Mammary epithelial cell (primary cell): ENCODE measurements at regions of chr6 and their contacts with region 1.

Region 1: DNA sequence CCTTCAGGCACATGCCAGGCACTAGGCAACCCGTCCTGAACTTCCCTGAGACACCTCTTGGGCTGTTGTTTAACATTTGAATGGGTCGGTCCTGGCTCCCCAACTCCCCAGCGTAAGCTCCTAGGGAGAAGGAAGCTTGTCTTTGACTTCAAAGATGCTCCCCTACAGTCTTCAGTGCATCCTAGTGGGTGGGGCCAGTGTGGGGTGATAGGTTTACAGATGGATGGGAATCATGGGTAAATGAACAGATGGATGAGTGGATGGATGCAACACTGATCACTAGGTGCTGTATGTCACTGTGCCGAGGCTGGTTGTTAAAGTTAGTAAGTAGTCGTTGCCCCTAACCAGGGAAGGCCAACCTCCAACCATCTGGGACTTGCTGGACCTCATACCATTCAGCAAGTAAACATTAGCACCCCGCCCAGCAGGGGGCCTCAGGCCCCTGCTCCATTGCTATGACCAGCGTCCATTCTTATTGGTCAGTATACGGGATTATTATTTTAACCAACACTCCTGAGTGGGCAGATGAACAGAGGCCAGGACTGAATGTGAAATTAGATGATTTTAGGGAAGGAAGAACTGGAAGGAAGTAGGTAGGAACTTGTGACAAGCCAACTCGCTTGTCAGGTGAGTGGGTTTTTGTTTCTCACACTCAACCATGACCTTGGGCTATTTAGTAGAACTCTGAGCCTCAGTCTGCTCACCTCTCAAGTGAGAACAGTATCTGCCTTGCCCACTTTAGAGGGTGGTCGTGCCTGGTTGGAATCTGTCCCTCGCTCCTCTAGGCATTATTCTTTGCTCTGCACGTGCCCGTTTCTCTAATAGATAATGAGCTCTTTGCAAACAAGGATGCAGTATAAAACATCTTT is 82.9 kb upstream of the FOXP4 start:
- DNase-seq: peak; percentile 39
- H3K4me3 ChIP-seq: no peak overlapping the region
- H3K27ac ChIP-seq: no peak overlapping the region
- H3K4me1 ChIP-seq: no peaks in the 10 kb centered on the region
- H3K27me3 ChIP-seq: no peaks in the 10 kb centered on the region
- CTCF ChIP-seq: peak; percentile 66 to 68

Region 2: DNA sequence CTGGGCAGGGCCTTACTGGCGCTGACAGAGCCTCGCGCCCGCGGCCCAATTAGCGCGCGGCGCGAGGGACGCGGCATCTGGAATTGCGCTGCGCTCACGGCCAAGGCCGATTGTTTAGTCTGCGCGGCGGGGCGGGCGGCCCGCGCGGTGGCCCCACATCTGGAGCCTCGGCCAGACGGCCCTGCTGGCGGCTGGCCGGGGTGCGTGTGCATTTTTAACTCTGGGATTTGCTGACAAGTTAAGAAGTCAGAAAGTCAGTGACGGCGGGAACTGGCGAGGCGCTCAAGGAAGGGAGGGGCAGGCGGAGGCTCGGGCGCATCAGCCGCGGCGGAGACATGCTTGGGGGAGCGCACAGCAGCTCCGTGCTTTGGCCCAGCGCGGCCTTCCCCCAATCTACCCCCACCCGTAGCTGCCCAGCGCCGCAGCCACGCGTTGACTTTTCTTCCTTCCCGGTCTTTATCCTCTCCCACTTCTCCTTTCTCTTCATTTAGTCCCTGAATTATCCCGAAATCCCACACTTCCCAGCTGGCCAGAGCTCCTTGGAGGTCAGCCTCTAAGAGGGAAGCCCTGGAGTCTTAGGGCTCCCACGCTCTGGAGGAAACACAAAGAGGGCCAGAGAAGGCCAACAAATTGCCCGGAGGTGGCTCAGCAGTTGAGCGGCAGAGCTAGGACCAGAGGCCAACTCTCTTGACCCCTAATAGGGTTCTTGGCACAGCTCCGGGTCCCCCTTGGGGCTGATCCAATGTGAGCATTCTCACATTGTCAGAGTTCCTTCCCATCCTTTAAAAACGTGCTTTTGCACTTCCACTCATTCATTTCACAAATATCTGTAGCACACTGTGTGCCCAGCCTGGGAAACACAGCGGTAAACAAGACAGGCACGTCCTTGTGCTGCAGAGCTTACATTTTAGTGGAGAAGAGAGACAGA is 42.1 kb after region 1 on chr6:
- CTCF ChIA-PET with region 1: no interaction called
- dilution Hi-C with region 1: loop called (anchors 5 kb)
- in situ Hi-C with region 1: no loop called
- intact Hi-C with region 1: loop called (anchors 10 kb)
- DNase-seq: peak; percentile 27
- H3K4me3 ChIP-seq: no peak overlapping the region
- H3K27ac ChIP-seq: no peak overlapping the region
- H3K4me1 ChIP-seq: peaks cover 9% of the 10 kb centered on the region
- H3K27me3 ChIP-seq: peaks cover 13% of the 10 kb centered on the region
- CTCF ChIP-seq: no peak

Region 3: DNA sequence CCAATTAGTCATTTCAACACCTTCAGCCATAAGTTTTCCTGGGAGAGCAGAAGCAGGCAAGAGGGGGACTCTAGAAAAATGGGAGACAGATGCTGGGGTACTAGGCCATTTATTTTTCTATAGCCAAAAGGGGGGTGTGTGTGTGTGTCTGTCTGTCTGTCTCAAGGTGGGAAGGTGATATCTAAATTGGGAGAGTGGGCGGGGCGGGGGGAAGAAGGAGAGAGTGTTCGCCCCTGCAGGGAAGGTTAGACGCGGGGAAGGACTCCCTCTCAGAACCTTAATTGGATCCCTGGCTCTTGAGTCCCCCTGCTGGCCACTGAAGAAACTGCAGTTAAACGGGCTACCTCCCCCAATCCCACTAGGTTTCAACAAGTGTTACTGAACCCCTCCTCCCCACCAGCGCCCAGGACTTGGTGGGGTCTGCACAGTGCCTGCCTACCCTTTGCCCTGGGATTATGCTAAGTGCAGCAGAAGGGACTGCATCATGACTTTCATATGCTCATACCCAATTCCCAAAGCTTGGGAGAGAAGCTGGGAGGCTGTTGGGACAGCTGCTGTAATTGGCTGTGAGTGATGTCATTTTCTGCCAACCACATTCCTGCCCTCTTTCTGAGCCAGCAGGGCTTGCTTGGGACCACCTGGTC is 128.7 kb after region 1 on chr6:
- CTCF ChIA-PET with region 1: no interaction called
- dilution Hi-C with region 1: no loop called
- in situ Hi-C with region 1: loop called in 1 of 2 experiments (anchors 10 kb)
- intact Hi-C with region 1: loop called (anchors 1 kb)
- DNase-seq: peak; percentile 41
- H3K4me3 ChIP-seq: no peak overlapping the region
- H3K27ac ChIP-seq: no peak overlapping the region
- H3K4me1 ChIP-seq: no peaks in the 10 kb centered on the region
- H3K27me3 ChIP-seq: no peaks in the 10 kb centered on the region
- CTCF ChIP-seq: peak; percentile 88 to 92

Region 4: GRCh38 chr6:41683510-41684310 is 220.4 kb after region 1 on chr6:
- CTCF ChIA-PET with region 1: no interaction called
- dilution Hi-C with region 1: no loop called
- in situ Hi-C with region 1: no loop called
- intact Hi-C with region 1: loop called (anchors 1 kb)
- DNase-seq: peak; percentile 39
- H3K4me3 ChIP-seq: no peak overlapping the region
- H3K27ac ChIP-seq: no peak overlapping the region
- H3K4me1 ChIP-seq: peaks cover 3% of the 10 kb centered on the region
- H3K27me3 ChIP-seq: no peaks in the 10 kb centered on the region
- CTCF ChIP-seq: peak; percentile 75 to 85